Ascending aorta (tissue), 2 donors: ENCODE measurements at regions of chr6 and their contacts with region 1.

Region 1: DNA sequence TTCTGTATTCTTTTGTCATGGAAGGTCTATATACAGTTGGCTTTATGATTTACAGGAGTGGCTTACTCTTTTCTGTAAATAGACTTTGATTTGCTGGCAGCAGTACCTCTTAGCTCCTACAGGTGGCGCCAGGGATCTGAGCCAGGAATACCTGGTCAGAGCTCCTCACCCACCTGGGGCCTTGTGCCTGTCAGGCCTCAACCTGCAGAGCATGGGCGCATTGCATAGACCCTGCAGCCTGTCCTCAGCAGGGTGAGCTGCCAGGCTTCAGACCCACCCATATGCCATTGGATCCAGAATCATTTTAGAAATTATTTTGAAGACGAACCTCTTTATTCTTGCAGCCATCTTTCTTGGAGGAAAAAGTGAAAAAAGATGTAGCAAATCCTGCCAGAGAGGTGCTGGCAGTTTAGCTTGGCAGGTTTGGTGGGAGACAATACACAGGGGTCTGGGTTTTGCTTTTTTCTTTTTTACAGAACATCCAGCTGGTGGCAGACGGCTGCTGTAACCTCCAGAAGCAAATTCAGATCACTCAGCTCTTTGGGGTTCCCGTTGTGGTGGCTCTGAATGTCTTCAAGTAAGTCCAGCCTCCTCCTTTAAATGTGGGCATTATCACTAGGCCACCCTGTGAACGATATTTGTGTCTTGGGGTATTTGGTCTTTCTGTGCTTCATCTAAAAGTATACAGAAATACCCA is 149.1 kb downstream of the MTHFD1L start:
- DNase-seq: peak in 1 of 2 donors; percentile 76
- H3K4me3 ChIP-seq: no peak overlapping the region
- H3K27ac ChIP-seq: no peak overlapping the region
- H3K4me1 ChIP-seq: no peaks in the 10 kb centered on the region
- H3K27me3 ChIP-seq: no peaks in the 10 kb centered on the region
- CTCF ChIP-seq: peak; percentile 90 to 97 (median 97)

Region 2: GRCh38 chr6:151136141-151136755 is 121.7 kb after region 1 on chr6:
- intact Hi-C with region 1: no loop called
- DNase-seq: no peak
- H3K4me3 ChIP-seq: no peak overlapping the region
- H3K27ac ChIP-seq: no peak overlapping the region
- H3K4me1 ChIP-seq: no peaks in the 10 kb centered on the region
- H3K27me3 ChIP-seq: no peaks in the 10 kb centered on the region
- CTCF ChIP-seq: no peak

Region 3: DNA sequence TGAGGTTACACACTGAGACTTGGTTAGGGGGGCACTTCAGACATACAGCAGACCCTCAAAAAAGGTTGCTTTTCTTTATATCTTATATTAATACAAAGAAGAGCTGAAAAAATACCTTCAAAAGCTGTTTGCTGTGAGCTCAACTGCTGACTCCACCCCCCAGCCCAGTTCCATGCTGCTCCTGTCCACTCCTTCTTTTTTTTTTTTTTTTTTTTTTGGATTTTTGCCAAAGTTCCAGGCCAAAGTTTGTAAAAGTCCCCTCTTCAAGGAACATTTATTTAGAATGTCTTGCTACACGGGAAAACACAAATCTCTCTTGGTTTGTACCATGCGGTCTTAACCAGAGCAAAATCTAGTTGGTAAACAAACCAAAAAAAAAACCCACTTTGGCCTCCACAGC is 139.9 kb after region 1 on chr6:
- intact Hi-C with region 1: loop called (anchors 10 kb)
- DNase-seq: no peak
- H3K4me3 ChIP-seq: no peak overlapping the region
- H3K27ac ChIP-seq: no peak overlapping the region
- H3K4me1 ChIP-seq: no peaks in the 10 kb centered on the region
- H3K27me3 ChIP-seq: no peaks in the 10 kb centered on the region
- CTCF ChIP-seq: no peak

Region 4: DNA sequence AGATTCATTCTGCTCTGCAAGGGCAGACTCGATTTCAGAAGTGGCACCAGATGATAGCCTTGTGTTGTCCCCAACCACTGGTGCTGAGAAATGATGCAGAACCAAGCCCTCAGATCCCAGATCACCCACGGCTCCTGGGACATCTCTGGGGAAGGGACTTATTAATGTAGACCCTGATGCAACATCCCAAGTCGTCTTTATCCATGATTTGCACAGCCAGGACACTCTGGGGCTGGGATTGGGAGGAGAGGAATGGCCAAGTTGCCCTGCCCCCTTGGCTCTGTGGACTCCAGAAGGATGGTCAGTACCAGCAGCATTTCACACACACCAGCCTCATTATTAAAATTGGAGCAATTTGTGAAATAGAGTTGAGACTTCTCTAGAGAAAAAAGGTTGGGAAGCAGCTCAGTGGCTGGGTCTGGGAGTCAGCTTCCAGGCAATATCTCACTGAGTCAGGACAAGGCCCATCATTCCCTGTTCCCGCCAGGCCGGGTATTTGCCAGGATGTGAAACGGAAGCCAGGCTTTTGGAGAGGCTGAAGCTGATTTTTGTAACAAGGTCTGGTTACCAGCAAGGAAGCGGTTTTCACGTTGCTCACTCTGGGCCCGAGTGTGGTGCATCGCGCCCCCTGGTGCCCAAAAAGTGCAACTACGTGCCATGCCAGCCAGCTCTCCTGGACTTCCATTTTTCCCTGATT is 309.4 kb after region 1 on chr6:
- intact Hi-C with region 1: loop called (anchors 1 kb)
- DNase-seq: peak; percentile 38 to 92
- H3K4me3 ChIP-seq: peak overlapping the region in 1 of 2 donors; percentile 69
- H3K27ac ChIP-seq: peak overlapping the region; percentile 58 to 59
- H3K4me1 ChIP-seq: peaks cover 5 to 11% of the 10 kb centered on the region in 2 donors
- H3K27me3 ChIP-seq: no peaks in the 10 kb centered on the region
- CTCF ChIP-seq: peak; percentile 92 to 97 (median 95)

Region 5: DNA sequence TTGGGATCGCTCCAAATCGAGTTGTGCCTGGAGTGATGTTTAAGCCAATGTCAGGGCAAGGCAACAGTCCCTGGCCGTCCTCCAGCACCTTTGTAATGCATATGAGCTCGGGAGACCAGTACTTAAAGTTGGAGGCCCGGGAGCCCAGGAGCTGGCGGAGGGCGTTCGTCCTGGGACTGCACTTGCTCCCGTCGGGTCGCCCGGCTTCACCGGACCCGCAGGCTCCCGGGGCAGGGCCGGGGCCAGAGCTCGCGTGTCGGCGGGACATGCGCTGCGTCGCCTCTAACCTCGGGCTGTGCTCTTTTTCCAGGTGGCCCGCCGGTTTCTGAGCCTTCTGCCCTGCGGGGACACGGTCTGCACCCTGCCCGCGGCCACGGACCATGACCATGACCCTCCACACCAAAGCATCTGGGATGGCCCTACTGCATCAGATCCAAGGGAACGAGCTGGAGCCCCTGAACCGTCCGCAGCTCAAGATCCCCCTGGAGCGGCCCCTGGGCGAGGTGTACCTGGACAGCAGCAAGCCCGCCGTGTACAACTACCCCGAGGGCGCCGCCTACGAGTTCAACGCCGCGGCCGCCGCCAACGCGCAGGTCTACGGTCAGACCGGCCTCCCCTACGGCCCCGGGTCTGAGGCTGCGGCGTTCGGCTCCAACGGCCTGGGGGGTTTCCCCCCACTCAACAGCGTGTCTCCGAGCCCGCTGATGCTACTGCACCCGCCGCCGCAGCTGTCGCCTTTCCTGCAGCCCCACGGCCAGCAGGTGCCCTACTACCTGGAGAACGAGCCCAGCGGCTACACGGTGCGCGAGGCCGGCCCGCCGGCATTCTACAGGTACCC is 793.2 kb after region 1 on chr6 and contains the start of gene ESR1:
- intact Hi-C with region 1: no loop called
- DNase-seq: no peak
- H3K4me3 ChIP-seq: peak within 1 kb of the TSS; percentile 64 to 75
- H3K27ac ChIP-seq: peak within 1 kb of the TSS; percentile 36 to 58
- H3K4me1 ChIP-seq: peaks cover 7 to 21% of the 10 kb centered on the region in 2 donors
- H3K27me3 ChIP-seq: no peaks in the 10 kb centered on the region
- CTCF ChIP-seq: no peak
- total RNA-seq, gene ESR1: 3.0 TPM